ENCODE measurements at regions of chr1 and their contacts with region 1.

Region 1: GRCh38 chr1:156146020-156146768 is 7.2 kb upstream of the SEMA4A start:
- DNase-seq: peak; percentile 90 to 92
- ATAC-seq: peak; percentile 69
- H3K4me3 ChIP-seq: no peak overlapping the region
- H3K27ac ChIP-seq: no peak overlapping the region
- H3K4me1 ChIP-seq: no peaks in the 10 kb centered on the region
- H3K27me3 ChIP-seq: no peaks in the 10 kb centered on the region

Region 2: GRCh38 chr1:156160743-156161171 is 14.6 kb after region 1 on chr1:
- intact Hi-C with region 1: loop called in 1 of 2 experiments (anchors 2 kb)
- DNase-seq: peak; percentile 91 to 94
- ATAC-seq: peak; percentile 85
- H3K4me3 ChIP-seq: no peak overlapping the region
- H3K27ac ChIP-seq: peak overlapping the region in 1 of 2 donors; percentile 13
- H3K4me1 ChIP-seq: no peaks in the 10 kb centered on the region
- H3K27me3 ChIP-seq: no peaks in the 10 kb centered on the region

Region 3: GRCh38 chr1:156193488-156194299 is 47.5 kb after region 1 on chr1 and contains the start of gene SLC25A44:
- intact Hi-C with region 1: loop called in 1 of 2 experiments (anchors 10 kb)
- DNase-seq: peak; percentile 97
- ATAC-seq: peak; percentile 100
- H3K4me3 ChIP-seq: peak within 1 kb of the TSS; percentile 70 to 84
- H3K27ac ChIP-seq: peak within 1 kb of the TSS; percentile 1 to 65
- H3K4me1 ChIP-seq: no peaks in the 10 kb centered on the region
- H3K27me3 ChIP-seq: no peaks in the 10 kb centered on the region
- total RNA-seq, gene SLC25A44: 15.7 to 18.6 TPM

Region 4: GRCh38 chr1:156212833-156213643 is 66.8 kb after region 1 on chr1 and contains the start of gene PMF1:
- intact Hi-C with region 1: loop called in 1 of 2 experiments (anchors 5 kb)
- DNase-seq: peak; percentile 98 to 99
- ATAC-seq: peak; percentile 98
- H3K4me3 ChIP-seq: peak within 1 kb of the TSS; percentile 53 to 56
- H3K27ac ChIP-seq: peak within 1 kb of the TSS; percentile 69 to 94
- H3K4me1 ChIP-seq: no peaks in the 10 kb centered on the region
- H3K27me3 ChIP-seq: no peaks in the 10 kb centered on the region
- total RNA-seq, gene PMF1: 31.4 to 38.5 TPM

Region 5: GRCh38 chr1:156225677-156226014 is 79.5 kb after region 1 on chr1:
- intact Hi-C with region 1: loop called (anchors 2 to 5 kb)
- DNase-seq: peak in 1 of 2 donors; percentile 21
- ATAC-seq: no peak
- H3K4me3 ChIP-seq: no peak overlapping the region
- H3K27ac ChIP-seq: no peak overlapping the region
- H3K4me1 ChIP-seq: no peaks in the 10 kb centered on the region
- H3K27me3 ChIP-seq: no peaks in the 10 kb centered on the region

Region 6: DNA sequence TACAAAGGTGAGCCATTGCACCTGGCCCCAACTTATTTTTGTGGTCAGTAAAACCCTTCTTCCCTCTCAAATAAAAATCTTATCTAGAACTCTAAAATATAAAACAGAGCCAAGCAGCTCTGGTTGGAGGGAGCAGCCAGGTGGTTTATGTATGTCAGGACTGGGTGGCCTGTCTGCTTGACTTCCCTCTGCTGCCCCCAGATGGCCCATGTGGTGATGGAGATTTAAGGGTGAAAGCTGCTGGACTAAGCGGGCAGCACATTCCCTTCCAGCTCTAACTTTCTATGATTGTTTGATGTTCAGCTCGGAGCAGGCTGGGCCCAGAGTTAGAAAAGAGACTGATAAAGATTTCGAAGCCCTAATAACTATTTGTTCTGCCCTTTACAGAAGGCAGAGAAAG is 113.6 kb after region 1 on chr1:
- intact Hi-C with region 1: no loop called
- DNase-seq: no peak
- ATAC-seq: no peak
- H3K4me3 ChIP-seq: no peak overlapping the region
- H3K27ac ChIP-seq: no peak overlapping the region
- H3K4me1 ChIP-seq: no peaks in the 10 kb centered on the region
- H3K27me3 ChIP-seq: no peaks in the 10 kb centered on the region